Panc1 (cell line): ENCODE measurements at regions of chr16 and their contacts with region 1.

Region 1: DNA sequence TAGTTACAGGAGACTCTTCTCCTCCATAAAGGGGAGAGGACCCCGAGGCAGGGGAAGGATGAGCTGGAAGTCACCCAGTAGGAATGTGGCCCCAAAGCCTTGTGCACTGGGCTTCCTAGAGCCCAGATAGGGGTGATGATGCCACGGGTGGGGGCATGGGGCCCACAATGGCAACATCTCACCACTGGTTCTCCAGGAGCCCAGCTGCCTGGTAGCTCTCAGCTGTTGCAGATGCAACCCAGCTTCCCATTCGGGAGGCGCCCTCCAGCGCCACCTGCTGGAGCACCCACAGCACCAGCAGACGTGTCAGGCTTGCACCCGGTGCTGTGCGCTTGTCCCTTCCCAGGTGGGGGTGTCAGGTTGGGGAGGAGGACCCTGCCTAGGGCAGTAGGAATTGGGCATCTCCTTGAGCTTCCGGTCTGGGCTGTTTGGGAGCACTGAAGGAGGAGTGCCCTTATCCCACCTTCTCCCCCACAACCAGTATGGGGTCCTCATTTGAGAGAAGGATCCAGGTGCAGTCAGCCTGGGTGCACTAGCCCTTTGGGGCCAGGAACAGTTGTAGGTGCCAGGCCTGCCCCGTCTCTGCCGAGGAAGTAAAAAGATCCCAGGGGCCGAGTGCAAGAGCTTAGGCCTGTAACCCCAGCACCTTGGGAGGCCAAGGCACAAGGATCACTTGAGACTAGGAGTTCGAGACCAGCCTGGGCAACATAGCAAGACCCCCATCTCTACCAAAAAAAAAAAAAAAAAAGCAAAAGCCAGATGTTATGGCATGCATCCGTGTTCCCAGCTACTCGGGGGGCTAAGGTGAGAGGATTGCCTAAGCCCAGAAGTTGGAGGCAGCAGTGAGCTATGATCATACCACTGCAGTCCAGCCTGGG is 14.4 kb downstream of the CDIPT start:
- DNase-seq: peak; percentile 51
- ATAC-seq: peak; percentile 91
- H3K4me3 ChIP-seq: no peak overlapping the region
- H3K27ac ChIP-seq: no peak overlapping the region
- H3K4me1 ChIP-seq: no peaks in the 10 kb centered on the region
- H3K27me3 ChIP-seq: no peaks in the 10 kb centered on the region
- CTCF ChIP-seq: peak; percentile 92

Region 2: GRCh38 chr16:29700253-29700987 is 148.2 kb before region 1 on chr16:
- CTCF ChIA-PET with region 1: interaction called, 11 read pairs
- POLR2A ChIA-PET with region 1: no interaction called
- in situ Hi-C with region 1: no loop called
- intact Hi-C with region 1: no loop called
- DNase-seq: peak; percentile 75
- ATAC-seq: peak; percentile 96
- H3K4me3 ChIP-seq: no peak overlapping the region
- H3K27ac ChIP-seq: no peak overlapping the region
- H3K4me1 ChIP-seq: no peaks in the 10 kb centered on the region
- H3K27me3 ChIP-seq: no peaks in the 10 kb centered on the region
- CTCF ChIP-seq: peak; percentile 97

Region 3: GRCh38 chr16:29862884-29863668 is 14.4 kb after region 1 on chr16 and contains the start of gene CDIPT:
- CTCF ChIA-PET with region 1: interaction called, 3 read pairs
- POLR2A ChIA-PET with region 1: interaction called, 12 read pairs
- in situ Hi-C with region 1: no loop called
- intact Hi-C with region 1: no loop called
- DNase-seq: peak; percentile 92
- ATAC-seq: peak; percentile 99
- H3K4me3 ChIP-seq: peak within 1 kb of the TSS; percentile 75 to 81
- H3K27ac ChIP-seq: peak within 1 kb of the TSS; percentile 98
- H3K4me1 ChIP-seq: no peaks in the 10 kb centered on the region
- H3K27me3 ChIP-seq: no peaks in the 10 kb centered on the region
- CTCF ChIP-seq: peak; percentile 87
- total RNA-seq, gene CDIPT: 71.6 TPM

Region 4: DNA sequence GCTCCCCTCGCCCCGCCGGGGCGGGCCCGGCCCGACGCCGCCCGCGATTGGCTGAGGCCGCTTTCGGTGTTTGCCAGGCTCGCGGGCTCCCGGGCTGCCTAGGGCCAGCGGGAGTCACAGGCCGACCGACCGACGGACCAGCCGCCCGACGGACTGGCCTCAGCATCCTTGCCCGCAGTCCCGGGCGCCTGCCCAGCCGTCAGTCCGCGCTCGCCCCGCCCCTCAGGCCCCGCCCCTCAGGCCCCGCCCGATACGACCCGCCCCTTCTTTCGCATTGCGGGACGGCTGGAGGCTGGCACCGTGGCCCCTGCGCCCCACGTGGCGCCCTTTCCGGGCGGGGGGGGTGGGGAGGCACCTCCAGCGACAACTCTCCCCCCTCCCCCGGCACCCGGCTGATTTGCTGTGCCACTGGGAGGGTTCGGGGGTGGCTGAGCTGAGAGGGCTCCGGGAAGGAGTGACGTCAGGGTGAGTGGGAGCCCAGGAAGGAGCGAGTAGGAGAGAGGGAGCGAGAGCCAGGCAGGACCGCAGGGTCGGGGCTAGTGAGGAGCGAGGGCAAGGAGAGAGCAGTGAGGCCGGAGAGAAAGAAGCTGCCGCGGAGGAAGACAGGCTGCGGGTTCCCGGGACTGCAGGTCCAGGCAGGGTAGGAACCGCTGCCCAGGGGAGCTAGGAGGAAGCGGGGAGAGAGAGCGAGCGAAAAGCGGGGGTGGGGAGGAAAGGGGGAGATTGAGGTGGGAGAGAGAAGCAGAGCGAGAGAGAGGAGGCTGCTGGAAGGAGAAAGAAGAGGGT is 51.6 kb after region 1 on chr16 and contains the start of gene ASPHD1:
- CTCF ChIA-PET with region 1: interaction called, 10 read pairs
- POLR2A ChIA-PET with region 1: no interaction called
- in situ Hi-C with region 1: no loop called
- intact Hi-C with region 1: no loop called
- DNase-seq: peak; percentile 57
- ATAC-seq: peak; percentile 84
- H3K4me3 ChIP-seq: peak within 1 kb of the TSS; percentile 48 to 71
- H3K27ac ChIP-seq: peak within 1 kb of the TSS; percentile 70
- H3K4me1 ChIP-seq: peaks cover 5% of the 10 kb centered on the region; the same call in 1 of the 2 replicates
- H3K27me3 ChIP-seq: no peaks in the 10 kb centered on the region
- CTCF ChIP-seq: no peak
- total RNA-seq, gene ASPHD1: 87.0 TPM

Region 5: DNA sequence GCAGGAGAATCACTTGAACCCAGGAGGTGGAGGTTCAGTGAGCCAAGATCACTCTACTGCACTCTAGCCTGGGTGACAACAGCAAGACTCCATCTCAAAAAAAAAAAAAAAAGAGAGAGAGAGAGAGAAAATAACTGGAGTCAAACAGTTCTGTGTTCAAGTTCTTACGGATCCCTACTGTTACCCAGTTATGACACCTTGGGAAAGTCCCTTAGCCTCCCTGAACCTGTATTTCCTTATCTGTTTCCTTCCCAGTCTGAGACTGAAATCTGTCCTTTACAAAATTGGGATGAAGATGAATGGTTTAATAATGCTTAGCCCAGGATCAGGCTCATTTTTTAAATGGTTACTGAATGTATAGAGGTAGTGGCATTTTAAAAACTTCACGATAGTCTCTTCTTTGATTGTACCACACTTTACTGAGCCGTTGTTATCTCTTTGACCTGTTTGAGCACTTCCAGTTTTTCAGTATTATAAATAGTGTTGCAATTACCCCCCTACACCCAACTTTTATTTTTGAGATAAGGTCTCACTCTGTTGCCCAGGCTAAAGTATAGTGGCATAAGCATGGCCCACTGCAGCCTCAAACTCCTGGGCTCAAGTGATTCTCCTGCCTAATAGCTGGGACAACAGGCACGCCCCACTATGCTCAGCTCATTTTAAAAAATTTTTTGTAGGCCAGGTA is 660.6 kb after region 1 on chr16:
- CTCF ChIA-PET with region 1: no interaction called
- POLR2A ChIA-PET with region 1: no interaction called
- in situ Hi-C with region 1: no loop called
- intact Hi-C with region 1: no loop called
- DNase-seq: no peak
- ATAC-seq: no peak
- H3K4me3 ChIP-seq: no peak overlapping the region
- H3K27ac ChIP-seq: no peak overlapping the region
- H3K4me1 ChIP-seq: no peaks in the 10 kb centered on the region
- H3K27me3 ChIP-seq: no peaks in the 10 kb centered on the region
- CTCF ChIP-seq: no peak